ENCODE measurements at regions of chr7 and their contacts with region 1.

Region 1: DNA sequence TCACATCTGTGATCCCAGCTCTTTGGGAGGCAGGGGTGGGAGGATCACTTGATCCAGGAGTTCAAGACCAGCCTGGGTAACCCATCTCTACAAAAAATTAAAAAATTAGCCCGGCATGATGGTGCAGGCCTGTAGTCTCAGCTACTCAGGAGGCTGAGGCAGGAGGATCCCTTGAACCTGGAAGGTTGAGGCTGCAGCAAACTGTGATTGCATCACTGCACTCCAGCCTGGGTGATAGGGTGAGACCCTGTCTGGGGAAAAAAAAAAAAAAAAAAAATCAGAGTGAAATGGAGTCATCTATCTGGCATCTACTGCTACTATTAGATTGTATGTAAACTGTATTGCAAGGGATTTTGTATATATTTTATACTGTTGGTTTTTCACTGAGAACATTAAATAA is 59.1 kb downstream of the KMT2E start:
- DNase-seq: no peak
- ATAC-seq: no peak
- H3K4me3 ChIP-seq: no peak overlapping the region
- H3K4me3 Mint-ChIP-seq: no peak overlapping the region
- H3K27ac ChIP-seq: no peak overlapping the region
- H3K27ac Mint-ChIP-seq: no peak overlapping the region
- H3K4me1 ChIP-seq: no peaks in the 10 kb centered on the region
- H3K4me1 Mint-ChIP-seq: peaks cover 17% of the 10 kb centered on the region
- H3K27me3 ChIP-seq: no peaks in the 10 kb centered on the region
- H3K27me3 Mint-ChIP-seq: no peaks in the 10 kb centered on the region
- CTCF ChIP-seq: no peak

Region 2: DNA sequence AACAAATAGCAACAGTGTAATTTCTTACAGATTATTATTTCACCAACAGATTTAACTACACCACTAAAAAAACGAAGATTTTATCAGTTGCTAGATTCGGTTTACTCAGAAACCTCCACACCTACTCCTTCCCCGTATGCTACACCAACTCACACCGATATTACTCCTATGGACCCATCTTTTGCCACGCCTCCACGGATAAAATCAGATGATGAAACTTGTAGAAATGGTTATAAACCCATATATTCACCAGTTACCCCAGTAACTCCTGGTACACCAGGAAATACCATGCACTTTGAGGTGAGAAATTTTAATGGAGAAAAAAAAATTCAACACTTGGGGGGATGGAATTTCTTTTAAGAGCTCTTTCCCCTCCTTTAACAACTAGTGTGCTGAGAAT is 33.3 kb after region 1 on chr7:
- CTCF ChIA-PET with region 1: no interaction called
- POLR2A ChIA-PET with region 1: interaction called, 3 read pairs
- intact Hi-C with region 1: loop called (anchors 5 kb)
- DNase-seq: no peak
- ATAC-seq: no peak
- H3K4me3 ChIP-seq: no peak overlapping the region
- H3K4me3 Mint-ChIP-seq: no peak overlapping the region
- H3K27ac ChIP-seq: no peak overlapping the region
- H3K27ac Mint-ChIP-seq: peak overlapping the region; percentile 37
- H3K4me1 ChIP-seq: no peaks in the 10 kb centered on the region
- H3K4me1 Mint-ChIP-seq: peaks cover 15% of the 10 kb centered on the region
- H3K27me3 ChIP-seq: no peaks in the 10 kb centered on the region
- H3K27me3 Mint-ChIP-seq: no peaks in the 10 kb centered on the region
- CTCF ChIP-seq: no peak

Region 3: GRCh38 chr7:105429746-105430612 is 356.8 kb after region 1 on chr7:
- CTCF ChIA-PET with region 1: no interaction called
- POLR2A ChIA-PET with region 1: no interaction called
- intact Hi-C with region 1: no loop called
- DNase-seq: peak; percentile 12 to 75 (median 53)
- ATAC-seq: peak; percentile 61
- H3K4me3 ChIP-seq: no peak overlapping the region
- H3K4me3 Mint-ChIP-seq: no peak overlapping the region
- H3K27ac ChIP-seq: no peak overlapping the region
- H3K27ac Mint-ChIP-seq: no peak overlapping the region
- H3K4me1 ChIP-seq: no peaks in the 10 kb centered on the region
- H3K4me1 Mint-ChIP-seq: no peaks in the 10 kb centered on the region
- H3K27me3 ChIP-seq: no peaks in the 10 kb centered on the region
- H3K27me3 Mint-ChIP-seq: no peaks in the 10 kb centered on the region
- CTCF ChIP-seq: peak; percentile 45